MCF 10A (cell line): ENCODE measurements at regions of chr10 and their contacts with region 1.

Region 1: DNA sequence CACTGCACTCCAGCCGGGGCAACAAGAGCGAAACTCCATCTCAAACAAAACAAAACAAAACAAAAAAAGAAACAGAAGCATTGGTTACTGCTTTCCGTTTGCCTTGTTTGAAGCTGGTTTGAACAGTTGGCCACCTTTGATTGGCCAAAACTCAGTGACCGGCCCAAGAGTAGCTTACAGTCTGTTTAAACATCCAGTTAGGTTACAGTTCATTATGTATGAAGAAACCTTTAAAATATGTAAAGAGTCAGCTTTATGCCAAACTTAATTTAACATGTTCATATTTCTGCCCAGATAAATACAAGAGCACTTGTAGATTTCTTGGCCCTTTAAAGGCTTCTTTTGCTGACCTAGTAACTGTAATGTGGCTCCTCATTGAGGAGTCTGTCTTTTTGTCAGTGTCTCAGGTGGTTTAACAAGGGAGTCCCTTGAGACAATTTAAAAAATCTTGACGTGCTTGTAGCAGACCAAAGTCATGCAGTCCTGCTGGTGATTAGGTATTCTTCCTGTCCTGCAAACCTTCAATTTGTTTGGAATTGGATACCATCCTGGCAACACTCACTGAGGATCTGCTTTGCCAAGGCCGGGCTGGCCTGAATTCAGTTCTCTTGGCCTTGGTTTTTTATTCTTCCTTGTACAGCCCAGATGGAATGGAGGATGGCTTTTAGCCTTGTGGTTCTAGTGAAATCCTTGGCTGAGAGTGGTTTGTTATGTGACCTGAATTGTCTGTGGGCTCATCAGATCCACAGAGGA is 128.9 kb downstream of the PLXDC2 start:
- DNase-seq: no peak
- H3K4me3 Mint-ChIP-seq: no peak overlapping the region
- H3K27ac Mint-ChIP-seq: no peak overlapping the region
- H3K4me1 Mint-ChIP-seq: no peaks in the 10 kb centered on the region
- H3K27me3 Mint-ChIP-seq: no peaks in the 10 kb centered on the region
- CTCF ChIP-seq: no peak

Region 2: GRCh38 chr10:19788075-19788686 is 156.9 kb before region 1 on chr10:
- CTCF ChIA-PET with region 1: no interaction called
- POLR2A ChIA-PET with region 1: no interaction called
- intact Hi-C with region 1: no loop called
- DNase-seq: peak; percentile 64
- H3K4me3 Mint-ChIP-seq: no peak overlapping the region
- H3K27ac Mint-ChIP-seq: no peak overlapping the region
- H3K4me1 Mint-ChIP-seq: peaks cover 23% of the 10 kb centered on the region
- H3K27me3 Mint-ChIP-seq: no peaks in the 10 kb centered on the region
- CTCF ChIP-seq: peak; percentile 76

Region 3: DNA sequence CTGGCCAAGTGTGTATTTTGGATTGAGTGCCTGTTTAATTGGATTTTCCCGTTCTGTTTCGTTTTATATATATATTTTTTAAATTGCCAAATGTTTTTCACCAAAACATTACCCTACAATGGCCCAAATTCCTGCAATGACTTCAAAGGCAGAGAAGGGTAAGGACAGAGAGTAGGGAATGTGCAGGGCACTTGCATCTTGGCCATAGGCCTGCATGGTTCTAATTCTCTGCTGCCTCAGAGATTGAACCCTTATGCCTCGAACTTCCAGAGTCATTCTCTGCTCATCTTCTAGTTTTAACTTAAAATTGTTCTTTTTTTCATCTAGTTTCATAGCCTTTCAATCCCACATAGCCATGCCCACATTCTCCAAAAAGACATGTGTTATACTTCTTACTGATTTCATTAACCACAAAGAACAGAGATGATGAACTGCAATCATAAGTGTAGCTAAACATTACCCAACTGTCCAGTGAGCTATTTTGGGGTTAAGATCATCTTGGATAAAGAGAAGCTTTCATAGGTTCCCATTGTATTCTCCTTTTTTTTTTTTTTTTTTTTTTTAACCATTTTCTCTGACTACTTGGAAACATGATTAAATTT is 48.7 kb after region 1 on chr10:
- CTCF ChIA-PET with region 1: no interaction called
- POLR2A ChIA-PET with region 1: interaction called, 3 read pairs
- intact Hi-C with region 1: loop called (anchors 10 kb)
- DNase-seq: no peak
- H3K4me3 Mint-ChIP-seq: no peak overlapping the region
- H3K27ac Mint-ChIP-seq: no peak overlapping the region
- H3K4me1 Mint-ChIP-seq: peaks cover 7% of the 10 kb centered on the region
- H3K27me3 Mint-ChIP-seq: no peaks in the 10 kb centered on the region
- CTCF ChIP-seq: no peak